Activated CD4-positive, alpha-beta memory T cell treated with anti-CD3 and anti-CD28 coated beads, Interleukin-2, amount 10 ng/mL, durations not matched to agents 7 days and 5 days (primary cell): ENCODE measurements at regions of chr7 and their contacts with region 1.

Region 1: DNA sequence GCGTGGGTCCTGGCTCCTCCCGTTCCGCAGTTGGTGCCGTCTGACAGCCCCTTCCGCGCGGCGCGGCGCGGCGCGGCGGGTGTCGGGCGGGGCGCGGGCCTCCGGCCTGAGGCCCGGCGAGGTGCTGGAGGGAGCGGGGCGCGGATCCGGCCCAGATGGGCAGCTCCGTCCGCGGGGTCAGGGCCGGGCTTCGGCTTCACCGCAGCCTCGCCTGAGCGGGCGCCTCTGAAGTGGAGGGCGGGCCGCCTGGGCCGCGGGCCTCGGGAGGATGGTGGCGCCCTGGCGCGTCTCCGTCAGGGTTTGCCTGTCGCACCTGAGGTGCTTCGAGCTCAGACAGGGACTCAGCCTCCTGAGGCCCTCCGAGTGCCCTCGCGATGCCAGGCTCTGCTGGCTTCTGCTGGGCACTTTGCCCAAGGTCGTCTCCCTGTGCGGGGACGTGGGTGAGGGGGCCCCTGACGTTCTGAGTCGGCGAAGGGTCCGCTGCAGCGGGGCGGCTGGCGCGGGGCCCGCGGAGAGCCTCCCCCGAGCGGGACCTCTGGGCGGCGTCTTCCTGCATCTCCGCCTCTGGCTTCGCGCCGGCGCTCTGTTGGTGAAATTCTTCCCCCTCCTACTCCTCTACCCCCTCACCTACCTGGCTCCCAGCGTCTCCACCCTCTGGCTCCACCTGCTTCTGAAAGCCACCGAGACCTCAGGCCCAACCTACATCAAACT is 473 bp downstream of the ADCK2 start:
- DNase-seq: peak; percentile 63
- H3K4me3 Mint-ChIP-seq: peak overlapping the region; percentile 80
- H3K27ac Mint-ChIP-seq: peak overlapping the region; percentile 75
- H3K4me1 Mint-ChIP-seq: peaks cover 34% of the 10 kb centered on the region
- H3K27me3 Mint-ChIP-seq: peaks cover 2% of the 10 kb centered on the region

Region 2: GRCh38 chr7:140696680-140697446 is 23.6 kb after region 1 on chr7 and contains the start of gene NDUFB2:
- CTCF ChIA-PET with region 1: interaction called, 4 read pairs
- POLR2A ChIA-PET with region 1: interaction called, 35 read pairs
- DNase-seq: peak; percentile 75
- H3K4me3 Mint-ChIP-seq: peak within 1 kb of the TSS; percentile 97
- H3K27ac Mint-ChIP-seq: peak within 1 kb of the TSS; percentile 94
- H3K4me1 Mint-ChIP-seq: peaks cover 33% of the 10 kb centered on the region
- H3K27me3 Mint-ChIP-seq: no peaks in the 10 kb centered on the region
- total RNA-seq, gene NDUFB2: 155 to 156 TPM